GM12878 (cell line): ENCODE measurements at regions of chr10 and their contacts with region 1.

Region 1: DNA sequence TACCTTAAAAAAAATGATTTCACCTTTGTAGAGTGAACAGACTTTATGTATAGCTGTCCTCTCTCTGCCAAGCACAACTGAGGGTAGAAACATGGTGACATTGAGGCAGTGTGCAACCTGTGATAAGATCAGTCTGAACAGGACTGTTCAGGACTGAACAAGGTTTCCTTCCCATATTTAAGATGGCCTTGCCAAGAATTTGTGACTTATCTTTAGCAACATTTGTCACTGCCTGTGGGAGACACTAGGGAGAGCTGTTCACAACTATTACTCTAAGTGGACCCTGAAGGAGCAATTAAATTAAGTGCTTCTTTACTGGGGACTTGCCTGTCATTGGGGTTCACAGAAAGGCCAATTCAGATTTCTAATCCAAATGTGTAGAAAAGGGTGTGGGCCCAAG is 6.7 kb downstream of the OR13A1 start:
- DNase-seq: peak; percentile 16
- ATAC-seq: peak; percentile 69
- H3K4me3 ChIP-seq: no peak overlapping the region
- H3K27ac ChIP-seq: no peak overlapping the region
- H3K4me1 ChIP-seq: no peaks in the 10 kb centered on the region
- H3K27me3 ChIP-seq: no peaks in the 10 kb centered on the region
- CTCF ChIP-seq: peak; percentile 45 to 57 (median 55); a peak in 5 of 6 replicates
- EP300 ChIP-seq: no peak
- POLR2A ChIP-seq: no peak
- RAD21 ChIP-seq: peak; percentile 69

Region 2: GRCh38 chr10:45278860-45279498 is 29.7 kb before region 1 on chr10:
- CTCF ChIA-PET with region 1: no interaction called
- POLR2A ChIA-PET with region 1: no interaction called
- RAD21 ChIA-PET with region 1: no interaction called
- SMC1A ChIA-PET with region 1: no interaction called
- in situ Hi-C with region 1: no loop called
- intact Hi-C with region 1: loop called (anchors 1 kb)
- DNase-seq: no peak
- ATAC-seq: no peak
- H3K4me3 ChIP-seq: no peak overlapping the region
- H3K27ac ChIP-seq: no peak overlapping the region
- H3K4me1 ChIP-seq: no peaks in the 10 kb centered on the region
- H3K27me3 ChIP-seq: no peaks in the 10 kb centered on the region; a peak in 1 of 4 replicates
- CTCF ChIP-seq: no peak
- EP300 ChIP-seq: no peak
- POLR2A ChIP-seq: no peak
- RAD21 ChIP-seq: no peak